Activated naive CD4-positive, alpha-beta T cell treated with anti-CD3 and anti-CD28 coated beads, Interleukin-2, amount 10 ng/mL, durations not matched to agents 7 days and 5 days (primary cell): ENCODE measurements at regions of chr12 and their contacts with region 1.

Region 1: DNA sequence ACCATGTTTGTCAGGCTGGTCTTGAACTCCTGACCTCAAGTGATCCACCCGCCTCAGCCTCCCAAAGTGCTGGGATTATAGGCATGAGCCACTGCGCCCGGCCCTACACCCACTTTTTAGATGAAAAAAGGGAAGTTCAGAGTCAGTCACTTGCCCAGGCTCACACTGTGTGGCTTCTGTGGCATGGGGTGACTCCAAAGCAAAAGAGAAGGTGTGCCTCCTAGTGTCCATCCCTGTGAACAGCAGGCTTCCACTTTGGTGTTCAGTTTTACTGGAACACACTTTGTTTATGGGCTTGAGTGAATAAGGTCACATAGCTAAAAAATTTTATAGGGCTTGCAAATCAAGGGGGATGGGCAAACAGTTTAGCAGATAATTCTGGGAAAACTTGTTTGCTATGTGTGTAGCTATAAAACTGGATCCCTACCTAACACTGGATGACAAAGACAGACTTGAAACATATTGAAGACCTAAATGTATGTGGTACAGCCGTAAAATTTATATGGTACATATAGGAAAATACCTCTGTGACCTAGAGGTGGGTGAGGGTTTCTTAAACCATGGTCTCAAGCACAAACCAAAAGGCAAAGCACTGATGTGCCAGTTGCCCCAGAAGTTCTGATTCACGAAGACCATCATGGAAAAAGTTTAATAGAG is 54.9 kb downstream of the EID3 start:
- DNase-seq: peak; percentile 83
- H3K4me3 Mint-ChIP-seq: no peak overlapping the region
- H3K27ac Mint-ChIP-seq: no peak overlapping the region
- H3K4me1 Mint-ChIP-seq: peaks cover 3% of the 10 kb centered on the region
- H3K27me3 Mint-ChIP-seq: no peaks in the 10 kb centered on the region

Region 2: DNA sequence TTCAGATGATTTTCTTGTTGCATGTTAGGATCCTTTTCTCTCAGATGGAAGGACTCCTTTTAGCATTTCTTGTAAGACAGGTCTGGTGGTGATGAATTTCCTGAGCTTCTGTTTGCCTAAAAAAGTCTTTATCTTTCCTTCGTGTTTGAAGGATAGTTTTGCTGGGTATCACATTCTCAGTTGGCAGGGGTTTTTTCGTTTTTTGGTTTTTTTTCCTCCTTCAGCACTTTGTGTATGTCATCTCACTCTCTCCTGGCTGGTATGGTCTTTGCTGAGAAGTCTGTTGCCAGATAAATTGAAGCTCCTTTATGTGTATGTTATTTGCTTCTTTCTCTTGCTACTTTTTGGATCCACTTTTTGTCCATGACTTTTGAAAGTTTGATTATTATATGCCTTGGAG is 158.5 kb before region 1 on chr12:
- CTCF ChIA-PET with region 1: interaction called, 14 read pairs
- DNase-seq: no peak
- H3K4me3 Mint-ChIP-seq: no peak overlapping the region
- H3K27ac Mint-ChIP-seq: no peak overlapping the region
- H3K4me1 Mint-ChIP-seq: no peaks in the 10 kb centered on the region
- H3K27me3 Mint-ChIP-seq: peaks cover 33% of the 10 kb centered on the region

Region 3: GRCh38 chr12:104446646-104447421 is 88.4 kb after region 1 on chr12:
- CTCF ChIA-PET with region 1: no interaction called
- DNase-seq: no peak
- H3K4me3 Mint-ChIP-seq: no peak overlapping the region
- H3K27ac Mint-ChIP-seq: no peak overlapping the region
- H3K4me1 Mint-ChIP-seq: peaks cover 2% of the 10 kb centered on the region
- H3K27me3 Mint-ChIP-seq: peaks cover 16% of the 10 kb centered on the region